ENCODE measurements at regions of chr2 and their contacts with region 1.

Region 1: DNA sequence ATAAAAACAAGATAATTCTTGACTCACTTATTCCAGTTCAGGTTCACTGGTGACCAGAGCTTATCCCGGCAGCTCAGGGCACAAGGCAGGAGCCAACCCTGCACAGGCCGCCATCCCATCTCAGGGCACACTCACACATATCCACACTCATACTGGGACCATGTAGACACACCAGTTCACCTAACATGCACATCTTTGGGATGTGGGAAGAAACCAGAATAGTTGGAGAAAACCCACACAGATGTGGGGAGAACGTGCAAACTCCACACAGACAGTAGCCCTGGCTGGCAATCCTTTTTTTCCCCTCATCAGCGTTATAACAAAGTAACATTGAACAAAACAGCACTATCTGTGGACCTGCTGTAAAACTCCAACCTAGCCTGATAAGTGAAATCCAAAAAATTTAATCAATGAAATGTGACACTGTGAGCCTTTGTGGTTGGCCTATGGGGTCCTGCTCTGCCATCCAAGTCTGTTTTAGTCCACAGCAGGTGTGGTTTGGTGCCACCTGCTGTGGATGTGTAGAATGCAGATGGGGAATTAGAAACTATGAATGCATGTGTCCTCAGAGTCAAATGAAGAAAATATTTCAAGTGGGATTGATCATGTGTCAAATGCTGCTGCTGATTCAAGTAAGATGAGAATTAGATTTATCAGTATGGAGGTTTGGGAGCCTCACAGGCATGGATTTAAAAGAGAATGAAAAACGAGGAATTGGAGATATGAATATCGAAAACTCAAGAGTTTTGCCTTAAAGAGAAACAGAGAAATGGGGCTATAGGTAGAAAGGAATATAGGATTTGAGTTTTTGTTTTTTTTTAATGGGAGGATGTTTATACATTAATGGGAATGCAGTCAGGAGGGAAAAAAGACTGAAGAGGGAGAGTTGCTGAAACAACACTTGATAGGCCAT is 47.0 kb downstream of the UGP2 start:
- DNase-seq: peak in 1 of 2 donors; percentile 22
- H3K4me3 ChIP-seq: no peak overlapping the region
- H3K27ac ChIP-seq: no peak overlapping the region
- H3K4me1 ChIP-seq: no peaks in the 10 kb centered on the region
- H3K27me3 ChIP-seq: no peaks in the 10 kb centered on the region
- CTCF ChIP-seq: peak; percentile 49 to 66 (median 58)
- POLR2A ChIP-seq: no peak

Region 2: DNA sequence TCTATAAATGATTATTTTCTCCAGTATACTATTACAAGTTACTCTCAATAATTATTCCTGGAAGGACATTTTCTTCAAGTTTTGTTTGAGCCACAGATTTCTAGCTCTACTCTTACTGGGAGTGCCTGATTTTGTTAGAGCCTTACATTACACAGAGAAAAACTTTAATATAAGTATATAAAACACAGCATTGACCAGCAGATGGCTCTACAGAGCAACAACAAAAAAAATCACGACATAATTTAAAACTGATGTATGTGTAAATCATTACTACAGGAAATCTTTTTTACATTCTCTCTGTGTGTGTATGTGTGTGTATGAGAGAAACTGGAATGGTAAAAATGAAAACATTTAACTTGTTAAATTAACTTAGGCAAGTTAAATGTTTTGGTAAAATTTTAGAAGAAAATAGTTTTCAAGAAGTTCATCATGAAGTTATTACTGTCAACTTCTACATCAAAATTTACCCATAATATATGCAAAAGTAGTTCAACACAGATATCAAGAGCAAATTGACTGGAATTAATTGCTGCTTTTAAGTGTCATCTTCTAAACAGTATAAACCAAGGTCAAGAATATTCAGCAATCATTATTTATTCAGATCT is 196.6 kb before region 1 on chr2:
- intact Hi-C with region 1: no loop called
- DNase-seq: peak in 1 of 2 donors; percentile 22
- H3K4me3 ChIP-seq: no peak overlapping the region
- H3K27ac ChIP-seq: no peak overlapping the region
- H3K4me1 ChIP-seq: no peaks in the 10 kb centered on the region
- H3K27me3 ChIP-seq: no peaks in the 10 kb centered on the region
- CTCF ChIP-seq: peak; percentile 56 to 64 (median 60)
- POLR2A ChIP-seq: no peak

Region 3: DNA sequence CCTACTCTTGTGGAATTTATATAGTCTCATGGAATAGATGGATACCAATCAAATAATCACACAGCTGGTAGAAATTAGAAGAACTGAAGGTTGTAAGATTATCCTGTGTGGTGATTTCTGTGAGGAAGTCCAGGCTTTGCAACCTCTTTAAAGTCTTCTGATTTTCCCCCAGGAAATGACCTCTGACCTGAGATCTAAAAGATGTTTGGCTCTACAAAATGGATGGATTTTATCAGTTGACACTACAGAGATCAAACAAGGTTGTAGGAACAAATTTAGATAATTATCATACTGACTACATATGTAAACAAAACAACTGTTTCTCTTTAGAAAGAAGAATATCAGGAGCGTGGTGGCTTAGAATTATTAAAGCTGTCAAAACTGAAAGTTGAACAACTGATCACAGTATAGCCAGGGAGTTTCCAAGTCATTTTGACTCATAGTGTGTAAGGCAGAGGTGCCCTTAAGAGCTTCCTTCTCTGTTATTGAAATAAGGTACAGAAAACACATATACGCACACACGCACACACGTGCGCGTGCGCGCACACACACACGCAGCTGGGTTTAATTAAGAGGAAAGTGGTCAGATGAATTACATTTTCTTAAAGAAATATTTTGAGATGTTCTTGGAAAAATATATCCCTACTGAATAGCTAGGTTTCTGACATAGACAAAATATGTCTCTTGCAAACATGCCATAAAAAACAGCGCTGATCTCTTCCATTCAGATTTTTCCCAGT is 291.0 kb after region 1 on chr2:
- intact Hi-C with region 1: loop called (anchors 10 kb)
- DNase-seq: no peak
- H3K4me3 ChIP-seq: no peak overlapping the region
- H3K27ac ChIP-seq: no peak overlapping the region
- H3K4me1 ChIP-seq: no peaks in the 10 kb centered on the region
- H3K27me3 ChIP-seq: no peaks in the 10 kb centered on the region
- CTCF ChIP-seq: no peak
- POLR2A ChIP-seq: no peak